Motor neuron (in vitro differentiated cells): ENCODE measurements at regions of chr9 and their contacts with region 1.

Region 1: DNA sequence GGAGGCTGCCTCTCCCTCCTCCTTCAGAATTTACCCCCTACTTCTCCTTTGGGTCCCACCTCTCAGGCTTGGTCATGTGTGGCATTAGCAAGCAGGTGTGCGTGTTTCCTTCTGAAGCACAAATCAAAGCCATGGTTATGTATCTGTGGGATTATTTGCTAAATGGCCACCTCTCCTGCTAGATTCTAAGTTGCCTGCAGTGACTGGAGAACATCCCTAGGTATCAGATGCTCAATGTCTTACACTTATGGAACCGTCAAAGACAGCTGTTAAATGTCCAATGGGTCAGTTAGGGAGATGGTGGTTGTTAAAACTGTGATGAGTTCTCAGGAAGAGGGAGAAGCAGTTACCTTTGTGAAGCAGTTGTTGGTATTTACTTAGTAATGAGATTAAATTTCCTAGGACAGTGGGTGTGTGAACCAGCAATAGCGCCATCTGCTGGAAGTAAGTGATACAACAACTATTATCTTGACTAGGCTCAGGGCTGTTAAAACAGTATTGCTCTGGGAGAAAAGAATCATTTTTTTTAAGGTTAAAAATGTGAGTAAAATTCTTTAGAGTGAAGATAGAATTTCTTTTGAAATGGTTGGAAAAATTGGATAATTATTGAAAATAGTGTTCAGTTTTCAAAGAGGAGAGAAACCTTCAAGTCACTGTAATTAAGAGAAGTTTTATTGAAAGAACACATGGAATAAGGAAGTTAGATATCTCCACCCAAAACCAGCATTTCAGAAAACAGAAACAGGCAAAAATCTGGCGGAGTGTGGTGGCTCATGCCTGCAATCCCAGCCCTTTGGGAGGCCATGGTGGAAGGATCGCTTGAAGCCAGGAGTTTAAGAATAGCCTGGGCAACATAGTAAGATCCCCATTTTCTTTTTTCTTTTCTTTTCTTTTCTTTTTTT is 71.3 kb downstream of the TMC1 start:
- ATAC-seq: peak; percentile 72 to 98 (median 84)
- H3K4me3 ChIP-seq: no peak overlapping the region
- H3K27ac ChIP-seq: no peak overlapping the region
- H3K4me1 ChIP-seq: peaks cover 4 to 12% of the 10 kb centered on the region in 2 donors

Region 2: DNA sequence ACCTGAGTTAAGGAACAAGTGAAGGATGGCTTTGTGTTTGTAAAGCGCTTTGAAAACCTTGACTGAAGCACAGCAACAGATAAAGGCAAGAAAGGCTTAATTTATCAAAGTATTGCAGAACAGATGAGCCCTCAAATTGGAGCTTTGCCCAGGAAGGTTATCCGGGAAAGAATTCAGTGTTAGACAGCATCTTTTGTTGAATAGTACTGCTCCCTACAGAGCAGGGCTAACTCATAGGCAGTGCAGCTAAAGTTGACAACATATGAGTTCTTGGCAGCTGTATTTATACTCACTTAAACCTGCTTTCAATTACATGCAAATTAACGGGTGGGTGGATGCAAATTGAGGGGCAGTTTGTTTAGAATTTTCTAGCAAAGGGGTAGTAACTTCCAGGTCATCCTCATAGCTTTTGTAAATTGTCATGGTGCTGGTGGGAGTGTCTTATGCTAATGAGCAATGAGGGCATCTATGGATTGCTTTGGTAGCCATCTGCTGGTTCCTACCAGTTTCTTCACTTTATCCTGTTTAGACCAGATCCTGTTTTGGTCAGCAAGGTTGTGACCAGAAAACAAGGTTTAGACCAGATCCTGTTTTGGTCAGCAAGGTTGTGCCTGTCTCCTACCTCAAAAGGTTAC is 337.7 kb before region 1 on chr9:
- in situ Hi-C with region 1: no loop called
- ATAC-seq: peak in 5 of 8 experiments; percentile 52 to 96 (median 95)
- H3K4me3 ChIP-seq: no peak overlapping the region
- H3K27ac ChIP-seq: no peak overlapping the region
- H3K4me1 ChIP-seq: no peaks in the 10 kb centered on the region

Region 3: GRCh38 chr9:72280913-72281500 is 311.7 kb before region 1 on chr9:
- in situ Hi-C with region 1: loop called in 5 of 9 experiments (anchors 25 kb)
- ATAC-seq: peak; percentile 66 to 96 (median 86)
- H3K4me3 ChIP-seq: no peak overlapping the region
- H3K27ac ChIP-seq: no peak overlapping the region
- H3K4me1 ChIP-seq: no peaks in the 10 kb centered on the region

Region 4: DNA sequence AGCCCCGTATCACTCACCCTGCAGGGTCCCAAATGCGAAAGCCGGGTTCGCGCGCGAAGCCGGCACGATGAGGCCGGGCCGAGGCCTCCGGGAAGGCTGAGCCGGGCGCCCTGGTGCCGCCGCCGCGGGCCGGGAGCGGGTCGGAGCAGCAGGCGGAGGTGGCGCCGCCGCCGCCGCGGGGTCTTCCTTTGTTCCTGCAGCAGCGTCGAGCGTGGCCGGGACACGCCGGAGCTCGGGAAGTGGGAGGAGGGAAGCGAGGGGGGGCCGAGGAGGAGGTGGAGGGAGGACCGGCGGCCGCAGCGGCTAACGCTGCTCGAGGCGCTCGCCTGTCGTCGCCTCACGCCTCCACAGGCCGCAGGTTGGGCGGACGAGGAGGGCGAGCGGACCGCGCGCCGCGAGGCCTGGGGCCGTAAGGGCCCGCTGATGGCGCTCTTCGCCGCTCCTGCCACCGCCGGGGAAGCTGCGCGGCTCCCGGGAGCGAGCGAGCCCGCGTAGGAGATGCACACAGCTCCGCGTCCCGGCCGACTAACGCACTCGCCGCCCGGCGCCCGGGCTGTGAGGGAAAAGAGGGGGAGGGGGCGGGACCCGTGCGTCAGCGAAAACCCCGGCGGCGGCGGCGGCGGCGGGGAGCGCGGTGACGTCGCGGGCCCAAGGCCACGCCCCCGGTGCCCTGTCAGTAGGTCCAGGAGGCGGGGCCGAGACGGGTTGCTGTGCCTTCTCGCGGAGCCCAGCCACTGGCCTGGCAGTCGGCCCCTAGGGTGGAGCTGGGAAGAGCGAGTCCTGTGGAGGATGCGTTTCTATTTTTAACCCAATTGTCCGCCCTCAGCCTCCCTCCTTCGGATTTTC is 227.9 kb before region 1 on chr9 and contains the start of gene ZFAND5:
- in situ Hi-C with region 1: loop called in 1 of 9 experiments (anchors 25 kb)
- ATAC-seq: peak; percentile 72 to 93 (median 90)
- H3K4me3 ChIP-seq: peak within 1 kb of the TSS; percentile 68 to 96 (median 89)
- H3K27ac ChIP-seq: peak within 1 kb of the TSS; percentile 96 to 97
- H3K4me1 ChIP-seq: peaks cover 15 to 29% of the 10 kb centered on the region in 2 donors
- total RNA-seq, gene ZFAND5: 84.5 to 425 (median 137) TPM

Region 5: GRCh38 chr9:72807765-72808445 is 215.2 kb after region 1 on chr9:
- in situ Hi-C with region 1: loop called in 1 of 9 experiments (anchors 25 kb)
- ATAC-seq: peak in 1 of 8 experiments; percentile 29
- H3K4me3 ChIP-seq: no peak overlapping the region
- H3K27ac ChIP-seq: no peak overlapping the region
- H3K4me1 ChIP-seq: peaks cover 0 to 6% of the 10 kb centered on the region in 2 donors

Region 6: DNA sequence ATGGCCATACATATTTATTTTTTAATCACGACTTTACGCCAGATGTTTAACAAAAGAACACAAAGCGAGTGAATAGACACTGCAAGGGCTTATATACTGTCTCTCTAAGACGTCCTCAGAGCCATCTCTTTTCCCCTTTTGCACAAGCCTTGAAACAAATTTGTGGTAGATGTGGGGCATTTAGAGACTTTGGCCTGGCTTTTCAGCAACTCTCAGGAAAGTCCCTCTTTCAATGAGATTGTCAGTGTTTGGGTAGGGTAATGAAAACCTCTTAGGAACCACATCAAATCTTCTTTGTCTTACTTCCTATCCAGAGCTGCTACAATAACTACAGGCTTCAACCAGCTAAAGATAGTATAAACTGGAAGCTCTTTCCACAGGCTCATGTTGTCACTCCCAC is 938.9 kb after region 1 on chr9:
- in situ Hi-C with region 1: no loop called
- ATAC-seq: peak in 3 of 8 experiments; percentile 19 to 62 (median 33)
- H3K4me3 ChIP-seq: no peak overlapping the region
- H3K27ac ChIP-seq: no peak overlapping the region
- H3K4me1 ChIP-seq: no peaks in the 10 kb centered on the region